Activated naive CD4-positive, alpha-beta T cell treated with anti-CD3 and anti-CD28 coated beads for 36 hours (primary cell): ENCODE measurements at regions of chr1 and their contacts with region 1.

Region 1: DNA sequence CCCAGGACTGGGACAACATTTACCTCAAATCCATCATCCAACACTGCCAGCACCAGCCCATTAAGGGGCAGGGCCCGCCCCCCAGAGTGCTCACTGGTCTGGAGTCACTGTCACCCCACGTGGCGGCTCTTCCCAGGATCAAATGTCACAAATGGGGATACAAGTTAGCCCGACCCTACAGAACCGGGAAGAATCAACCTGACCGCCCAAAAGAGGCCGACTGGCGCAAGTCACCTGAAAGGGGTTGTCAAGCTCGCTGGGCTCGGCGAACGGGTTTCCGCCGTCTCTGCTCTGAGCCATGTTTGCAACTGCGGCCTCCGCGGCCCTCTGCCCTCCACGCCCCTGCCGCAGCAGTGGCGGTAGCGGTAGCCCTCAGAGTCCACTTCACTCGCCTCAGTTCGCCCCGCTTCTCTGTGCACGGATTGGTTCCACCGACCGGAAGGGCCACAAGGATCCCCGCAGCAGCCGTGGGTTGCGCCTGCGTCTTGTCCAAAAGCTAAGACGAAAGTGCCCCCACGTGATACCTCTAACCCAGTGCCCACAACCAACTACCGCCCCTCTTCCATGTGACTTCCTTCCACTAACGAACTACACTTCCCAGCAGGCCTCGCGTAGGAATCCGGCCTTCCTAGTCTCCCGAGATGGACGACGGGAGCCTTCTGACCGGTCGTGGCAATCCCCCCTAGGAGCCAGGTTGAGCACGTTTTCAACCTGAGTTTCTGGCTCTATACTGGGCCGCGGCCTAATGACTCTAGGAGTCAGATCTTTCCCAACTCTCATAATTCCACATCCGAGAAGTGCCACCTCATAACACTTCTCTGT is at the start of gene SCAMP3:
- DNase-seq: peak; percentile 95
- H3K4me3 Mint-ChIP-seq: peak within 1 kb of the TSS; percentile 95
- H3K27ac Mint-ChIP-seq: peak within 1 kb of the TSS; percentile 93
- H3K4me1 Mint-ChIP-seq: peaks cover 27% of the 10 kb centered on the region
- H3K27me3 Mint-ChIP-seq: no peaks in the 10 kb centered on the region
- total RNA-seq, gene SCAMP3: 80.3 to 82.9 TPM

Region 2: DNA sequence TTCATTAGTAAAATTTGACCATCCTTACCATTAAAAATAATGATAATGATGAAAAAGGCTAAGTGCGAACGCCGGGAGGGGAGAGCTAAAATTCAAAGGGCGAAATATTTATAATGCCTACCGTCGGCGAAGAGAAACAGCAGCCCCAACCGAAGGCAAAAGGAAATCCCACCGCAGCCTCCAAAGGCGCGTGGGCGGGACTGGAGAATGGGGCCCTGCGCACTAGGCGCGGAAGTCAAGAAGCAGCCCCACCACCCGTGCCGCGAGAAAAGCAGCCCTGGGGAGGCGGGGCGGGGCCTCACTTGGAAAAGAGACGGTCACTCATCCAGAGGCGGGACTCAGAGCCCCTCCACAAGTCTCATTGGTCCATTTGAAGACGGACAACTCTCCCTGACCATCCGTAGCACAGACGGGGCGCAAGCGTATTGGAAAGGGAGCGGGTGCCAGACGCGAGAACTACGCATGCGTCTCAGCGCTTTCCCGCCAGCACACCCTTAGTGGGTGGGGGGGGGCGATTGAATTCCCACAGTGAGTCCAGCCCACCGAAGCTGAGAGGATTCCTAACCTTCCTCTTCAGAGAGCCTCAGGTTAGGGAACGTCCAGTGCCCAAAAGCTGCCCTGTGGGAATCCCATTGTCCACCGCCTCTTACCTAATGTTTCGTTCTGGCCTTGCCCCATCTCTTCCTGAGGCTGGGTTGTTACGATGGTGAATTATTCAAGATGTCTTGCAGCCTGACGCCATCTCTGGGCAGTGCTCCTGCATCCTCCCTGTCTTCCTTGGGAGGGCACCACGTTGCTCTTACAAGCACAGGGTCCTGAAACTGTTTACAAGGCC is 34.6 kb before region 1 on chr1:
- CTCF ChIA-PET with region 1: no interaction called
- intact Hi-C with region 1: loop called (anchors 1 kb)
- DNase-seq: peak; percentile 100
- H3K4me3 Mint-ChIP-seq: peak overlapping the region; percentile 89
- H3K27ac Mint-ChIP-seq: peak overlapping the region; percentile 96
- H3K4me1 Mint-ChIP-seq: peaks cover 31% of the 10 kb centered on the region
- H3K27me3 Mint-ChIP-seq: no peaks in the 10 kb centered on the region

Region 3: DNA sequence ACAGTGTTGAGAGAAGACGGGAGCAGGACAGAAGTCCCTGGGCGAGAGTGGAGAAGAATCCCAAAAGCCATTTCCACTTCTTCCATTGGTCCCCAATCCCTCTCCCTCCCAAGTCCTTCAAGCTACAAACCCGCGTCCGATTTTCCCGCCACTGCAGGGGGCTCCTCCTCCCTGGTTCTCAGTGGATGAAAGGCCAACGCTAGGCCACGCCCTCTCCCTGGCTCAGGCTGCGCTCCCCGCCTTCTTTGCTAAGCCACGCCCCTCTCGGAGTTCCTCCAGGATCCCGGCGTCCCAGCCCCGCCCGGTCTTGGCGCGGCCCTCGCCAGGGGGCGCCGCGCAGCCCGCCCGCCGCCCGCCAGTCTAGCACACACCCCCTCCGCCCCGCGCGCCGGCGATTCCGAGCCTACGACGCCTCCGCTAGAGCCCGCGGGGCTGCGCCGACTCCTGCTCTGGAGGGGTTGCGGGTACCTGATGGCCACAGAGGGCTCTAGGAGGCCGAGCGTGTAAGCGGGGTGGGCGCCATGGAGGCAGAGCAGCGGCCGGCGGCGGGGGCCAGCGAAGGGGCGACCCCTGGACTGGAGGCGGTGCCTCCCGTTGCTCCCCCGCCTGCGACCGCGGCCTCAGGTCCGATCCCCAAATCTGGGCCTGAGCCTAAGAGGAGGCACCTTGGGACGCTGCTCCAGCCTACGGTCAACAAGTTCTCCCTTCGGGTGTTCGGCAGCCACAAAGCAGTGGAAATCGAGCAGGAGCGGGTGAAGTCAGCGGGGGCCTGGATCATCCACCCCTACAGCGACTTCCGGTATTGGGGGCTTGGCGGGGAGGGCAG is 15.2 kb after region 1 on chr1 and contains the start of gene HCN3:
- CTCF ChIA-PET with region 1: interaction called, 7 read pairs
- intact Hi-C with region 1: loop called (anchors 1 kb)
- DNase-seq: peak; percentile 96
- H3K4me3 Mint-ChIP-seq: peak within 1 kb of the TSS; percentile 62
- H3K27ac Mint-ChIP-seq: no peak within 1 kb of the TSS
- H3K4me1 Mint-ChIP-seq: peaks cover 30% of the 10 kb centered on the region
- H3K27me3 Mint-ChIP-seq: no peaks in the 10 kb centered on the region
- total RNA-seq, gene HCN3: 0.79 to 1.6 TPM

Region 4: GRCh38 chr1:156020292-156021089 is 758.4 kb after region 1 on chr1 and contains the start of gene SSR2:
- CTCF ChIA-PET with region 1: no interaction called
- intact Hi-C with region 1: loop called (anchors 1 kb)
- DNase-seq: peak; percentile 94
- H3K4me3 Mint-ChIP-seq: peak within 1 kb of the TSS; percentile 84
- H3K27ac Mint-ChIP-seq: peak within 1 kb of the TSS; percentile 91
- H3K4me1 Mint-ChIP-seq: peaks cover 28% of the 10 kb centered on the region
- H3K27me3 Mint-ChIP-seq: no peaks in the 10 kb centered on the region
- total RNA-seq, gene SSR2: 141 to 142 TPM